CD4-positive, alpha-beta T cell (primary cell): ENCODE measurements at regions of chr2 and their contacts with region 1.

Region 1: DNA sequence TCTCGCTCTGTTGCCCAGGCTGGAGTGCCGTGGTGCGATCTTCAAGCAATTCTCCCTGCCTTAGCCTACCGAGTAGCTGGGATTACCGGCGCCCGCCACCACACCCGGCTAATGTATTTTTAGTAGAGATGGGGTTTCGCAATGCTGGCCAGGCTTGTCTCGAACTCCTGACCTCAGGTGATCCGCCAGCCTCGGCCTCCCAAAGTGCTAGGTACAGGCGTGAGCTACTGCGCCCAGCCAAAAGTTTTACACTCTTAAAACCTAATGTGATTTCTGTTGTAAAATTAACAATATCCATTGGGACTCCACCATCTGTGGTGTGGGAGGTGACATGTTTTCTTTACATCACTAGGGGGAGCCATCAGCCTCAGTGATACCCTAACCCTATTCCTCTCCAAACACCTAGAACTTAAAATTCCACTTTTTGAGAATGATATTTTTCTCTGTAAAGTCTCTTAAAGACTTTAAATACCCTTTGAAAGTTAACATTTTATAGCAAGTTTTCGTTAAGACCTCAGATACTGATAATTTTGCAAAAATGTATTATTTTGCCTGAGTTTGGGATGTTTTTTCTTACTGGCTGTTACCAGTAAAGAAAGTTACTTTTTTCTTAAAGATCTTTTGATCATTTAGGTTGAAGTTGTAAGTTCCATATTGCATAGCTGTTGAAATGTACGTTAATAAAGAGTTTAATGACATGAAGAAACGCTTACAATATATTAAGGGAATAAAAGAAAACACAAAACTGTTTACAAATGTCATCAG is 11.6 kb upstream of the EIF2AK2 start:
- DNase-seq: peak in 6 of 14 experiments; percentile 6 to 66 (median 46)
- ATAC-seq: peak; percentile 85
- H3K4me3 ChIP-seq: no peak overlapping the region
- H3K4me3 Mint-ChIP-seq: no peak overlapping the region
- H3K27ac ChIP-seq: no peak overlapping the region
- H3K27ac Mint-ChIP-seq: no peak overlapping the region
- H3K4me1 ChIP-seq: no peaks in the 10 kb centered on the region
- H3K4me1 Mint-ChIP-seq: no peaks in the 10 kb centered on the region
- H3K27me3 ChIP-seq: no peaks in the 10 kb centered on the region
- H3K27me3 Mint-ChIP-seq: no peaks in the 10 kb centered on the region
- CTCF ChIP-seq: peak; percentile 71

Region 2: DNA sequence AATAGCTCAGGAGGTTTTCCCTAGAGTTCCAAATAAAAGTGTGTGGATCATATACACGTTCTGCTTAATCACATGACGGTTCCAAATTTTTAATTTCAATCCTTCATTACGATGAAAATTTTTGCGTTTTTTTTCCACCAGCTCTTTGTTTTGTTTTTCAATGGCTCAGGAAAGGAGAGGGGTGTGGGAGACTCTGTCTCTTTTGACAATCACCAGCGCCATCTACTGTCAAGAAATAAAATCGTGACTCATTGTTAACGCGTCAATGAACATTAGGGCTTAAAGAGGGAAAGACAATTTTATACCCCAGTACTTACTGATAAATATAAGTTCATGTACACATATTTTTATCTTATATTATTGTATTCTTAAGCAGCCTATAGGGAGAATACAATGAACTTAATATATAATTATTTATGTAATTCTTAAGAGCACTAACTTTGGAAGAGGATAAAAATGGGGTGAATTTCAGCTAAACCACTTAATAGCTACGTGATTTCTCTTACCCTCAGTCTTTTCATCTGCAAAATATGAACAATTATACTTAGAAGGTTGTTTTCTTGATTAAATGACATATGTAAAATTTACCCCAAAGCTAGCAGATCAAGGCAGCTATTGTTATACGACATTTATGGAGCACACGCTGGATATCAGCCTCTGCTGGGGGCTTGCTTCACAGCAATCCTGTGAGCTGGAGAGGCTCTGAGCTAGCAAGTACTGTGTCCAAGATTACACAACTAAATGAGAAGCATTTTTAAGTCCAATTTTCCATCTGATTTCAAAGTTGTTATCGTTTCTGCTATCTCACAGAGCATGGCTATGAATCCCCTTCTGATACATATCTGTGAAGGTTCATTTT is 709.3 kb after region 1 on chr2:
- CTCF ChIA-PET with region 1: no interaction called
- POLR2A ChIA-PET with region 1: no interaction called
- intact Hi-C with region 1: loop called in 1 of 2 experiments (anchors 5 kb)
- DNase-seq: peak in 5 of 14 experiments; percentile 26 to 78 (median 71)
- ATAC-seq: peak; percentile 70
- H3K4me3 ChIP-seq: no peak overlapping the region
- H3K4me3 Mint-ChIP-seq: no peak overlapping the region
- H3K27ac ChIP-seq: no peak overlapping the region
- H3K27ac Mint-ChIP-seq: no peak overlapping the region
- H3K4me1 ChIP-seq: no peaks in the 10 kb centered on the region
- H3K4me1 Mint-ChIP-seq: no peaks in the 10 kb centered on the region
- H3K27me3 ChIP-seq: peaks cover 0 to 4% of the 10 kb centered on the region in 2 experiments
- H3K27me3 Mint-ChIP-seq: peaks cover 15% of the 10 kb centered on the region
- CTCF ChIP-seq: peak; percentile 90